Endothelial cell of umbilical vein (primary cell): ENCODE measurements at regions of chr10 and their contacts with region 1.

Region 1: GRCh38 chr10:60099998-60100747 is 193.8 kb upstream of the CCDC6 start:
- DNase-seq: peak; percentile 61
- H3K4me3 ChIP-seq: no peak overlapping the region
- H3K27ac ChIP-seq: no peak overlapping the region
- H3K4me1 ChIP-seq: no peaks in the 10 kb centered on the region
- H3K27me3 ChIP-seq: no peaks in the 10 kb centered on the region
- CTCF ChIP-seq: peak; percentile 20 to 40
- POLR2A ChIP-seq: no peak

Region 2: DNA sequence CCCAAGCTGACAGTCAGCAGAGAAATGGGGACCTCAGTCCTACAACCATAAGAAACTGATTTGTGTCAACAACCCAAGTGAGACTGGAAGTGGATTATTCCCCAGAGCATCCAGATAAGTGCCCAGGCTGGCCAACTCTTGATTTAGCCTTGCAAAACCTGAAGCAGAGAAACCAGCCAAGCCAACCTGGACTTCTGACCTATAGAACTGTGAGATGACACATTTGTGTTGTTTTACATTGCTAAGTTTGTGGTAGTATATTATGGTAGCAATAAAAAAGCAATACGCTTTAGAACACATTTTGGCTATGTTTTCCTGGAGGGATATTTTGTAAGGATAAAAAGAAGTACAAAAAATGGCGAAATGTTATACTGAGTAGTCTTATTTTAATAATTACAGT is 174.1 kb before region 1 on chr10:
- CTCF ChIA-PET with region 1: no interaction called
- POLR2A ChIA-PET with region 1: no interaction called
- dilution Hi-C with region 1: no loop called
- intact Hi-C with region 1: no loop called
- DNase-seq: no peak
- H3K4me3 ChIP-seq: no peak overlapping the region
- H3K27ac ChIP-seq: no peak overlapping the region
- H3K4me1 ChIP-seq: no peaks in the 10 kb centered on the region
- H3K27me3 ChIP-seq: no peaks in the 10 kb centered on the region
- CTCF ChIP-seq: no peak
- POLR2A ChIP-seq: no peak

Region 3: GRCh38 chr10:60069311-60069710 is 30.9 kb before region 1 on chr10:
- CTCF ChIA-PET with region 1: no interaction called
- POLR2A ChIA-PET with region 1: no interaction called
- dilution Hi-C with region 1: no loop called
- intact Hi-C with region 1: no loop called
- DNase-seq: no peak
- H3K4me3 ChIP-seq: no peak overlapping the region
- H3K27ac ChIP-seq: no peak overlapping the region
- H3K4me1 ChIP-seq: no peaks in the 10 kb centered on the region
- H3K27me3 ChIP-seq: no peaks in the 10 kb centered on the region
- CTCF ChIP-seq: no peak
- POLR2A ChIP-seq: no peak

Region 4: GRCh38 chr10:60086862-60087261 is 13.3 kb before region 1 on chr10:
- CTCF ChIA-PET with region 1: interaction called, 6 read pairs
- POLR2A ChIA-PET with region 1: interaction called, 10 read pairs
- dilution Hi-C with region 1: no loop called
- intact Hi-C with region 1: no loop called
- DNase-seq: no peak
- H3K4me3 ChIP-seq: no peak overlapping the region
- H3K27ac ChIP-seq: no peak overlapping the region
- H3K4me1 ChIP-seq: peaks cover 2% of the 10 kb centered on the region
- H3K27me3 ChIP-seq: no peaks in the 10 kb centered on the region
- CTCF ChIP-seq: no peak
- POLR2A ChIP-seq: no peak

Region 5: DNA sequence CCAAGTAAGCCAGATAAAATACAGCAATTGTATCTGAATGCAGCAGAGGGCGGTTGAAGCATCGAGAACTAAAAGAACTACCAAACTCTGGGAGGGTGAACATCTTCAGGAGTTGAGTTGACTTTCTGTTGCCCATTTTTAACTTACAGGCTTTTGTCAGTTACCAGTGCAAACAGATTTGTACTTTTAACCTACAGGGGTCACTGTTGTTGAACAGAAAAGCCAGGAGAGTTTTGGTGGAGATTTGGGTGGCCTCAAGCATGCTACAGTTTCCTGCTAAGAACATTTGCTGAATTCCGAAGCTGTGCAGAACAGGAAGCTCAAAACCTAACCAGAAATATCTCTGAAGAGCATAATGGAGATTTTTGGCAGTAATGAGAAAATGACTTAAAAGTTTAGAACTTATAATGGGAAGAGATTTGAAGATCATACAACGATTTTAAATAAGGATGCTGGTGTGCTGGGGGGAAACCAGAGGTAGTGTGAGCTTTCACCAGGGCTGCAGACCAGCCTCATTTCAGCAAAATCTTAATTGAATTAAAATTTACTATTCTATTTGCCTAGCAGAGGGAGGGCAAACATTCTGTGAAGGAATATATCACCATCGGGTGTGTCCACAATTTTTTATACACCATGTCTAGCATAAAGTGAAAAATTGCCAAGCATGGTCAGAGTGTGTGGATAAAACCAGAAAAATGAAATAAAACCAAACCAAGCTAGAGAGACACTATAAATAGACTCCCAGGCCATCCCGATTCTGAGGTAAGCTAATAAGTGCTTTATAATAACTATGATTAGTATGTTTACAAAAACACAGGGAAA is 14.8 kb after region 1 on chr10:
- CTCF ChIA-PET with region 1: interaction called, 44 read pairs
- POLR2A ChIA-PET with region 1: no interaction called
- dilution Hi-C with region 1: no loop called
- intact Hi-C with region 1: no loop called
- DNase-seq: peak; percentile 69
- H3K4me3 ChIP-seq: no peak overlapping the region
- H3K27ac ChIP-seq: no peak overlapping the region
- H3K4me1 ChIP-seq: no peaks in the 10 kb centered on the region
- H3K27me3 ChIP-seq: no peaks in the 10 kb centered on the region
- CTCF ChIP-seq: peak; percentile 49 to 55
- POLR2A ChIP-seq: no peak

Region 6: GRCh38 chr10:60444494-60445064 is 344.4 kb after region 1 on chr10:
- CTCF ChIA-PET with region 1: interaction called, 53 read pairs
- POLR2A ChIA-PET with region 1: no interaction called
- dilution Hi-C with region 1: no loop called
- intact Hi-C with region 1: no loop called
- DNase-seq: peak; percentile 45
- H3K4me3 ChIP-seq: no peak overlapping the region
- H3K27ac ChIP-seq: no peak overlapping the region
- H3K4me1 ChIP-seq: peaks cover 7% of the 10 kb centered on the region
- H3K27me3 ChIP-seq: no peaks in the 10 kb centered on the region
- CTCF ChIP-seq: peak; percentile 14 to 18
- POLR2A ChIP-seq: no peak

Region 7: GRCh38 chr10:60646966-60647796 is 547.0 kb after region 1 on chr10:
- CTCF ChIA-PET with region 1: interaction called, 9 read pairs
- POLR2A ChIA-PET with region 1: no interaction called
- dilution Hi-C with region 1: no loop called
- intact Hi-C with region 1: loop called (anchors 2 kb)
- DNase-seq: peak; percentile 65
- H3K4me3 ChIP-seq: no peak overlapping the region
- H3K27ac ChIP-seq: no peak overlapping the region
- H3K4me1 ChIP-seq: no peaks in the 10 kb centered on the region
- H3K27me3 ChIP-seq: no peaks in the 10 kb centered on the region
- CTCF ChIP-seq: peak; percentile 34 to 43
- POLR2A ChIP-seq: no peak